CD14-positive monocyte (primary cell): ENCODE measurements at regions of chr2 and their contacts with region 1.

Region 1: DNA sequence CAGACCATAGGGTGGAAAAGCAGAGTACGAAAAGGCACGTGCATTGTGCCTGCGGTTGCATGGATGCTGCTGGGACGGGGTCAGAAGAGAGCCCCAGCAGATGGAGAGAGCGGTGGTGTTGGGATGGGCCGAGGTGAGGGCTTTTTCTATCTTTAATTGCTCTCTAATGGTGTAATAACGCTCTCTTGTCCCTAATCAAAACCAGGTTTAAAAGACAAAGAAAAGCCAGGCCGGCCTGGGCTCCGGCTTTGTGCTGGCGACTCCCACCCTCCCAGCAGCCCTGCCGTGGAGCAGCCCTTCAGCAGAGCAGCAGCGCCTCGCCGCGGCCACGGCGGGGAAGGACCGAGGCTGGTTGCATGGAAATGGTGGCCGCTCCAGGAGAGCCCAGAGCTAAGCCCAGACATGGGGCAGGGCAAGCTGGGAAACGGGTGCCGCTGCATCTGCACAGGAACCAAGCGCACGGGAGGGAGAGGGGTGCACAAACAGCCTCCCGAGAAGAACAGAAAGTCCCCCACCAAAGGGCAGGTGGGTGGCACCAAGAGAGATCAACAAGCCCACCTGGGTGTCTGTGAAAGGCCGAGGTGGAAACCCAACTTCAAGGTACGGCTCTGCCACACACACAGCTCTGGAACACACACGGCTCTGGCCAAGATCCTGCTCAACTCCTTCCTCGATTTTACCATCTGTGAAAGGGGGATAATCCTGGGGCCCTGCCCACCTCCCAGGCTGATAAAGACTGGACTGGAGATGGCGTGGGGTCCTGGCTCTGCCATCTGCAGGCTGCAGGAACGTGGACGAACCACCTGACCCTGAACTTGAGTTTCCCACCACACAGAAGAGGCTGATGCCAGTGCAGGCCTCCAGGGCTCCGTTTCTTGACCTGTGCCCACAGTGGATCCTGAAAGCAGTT is 15.0 kb downstream of the HS1BP3 start:
- DNase-seq: peak; percentile 18 to 46 (median 41)
- H3K4me3 ChIP-seq: no peak overlapping the region
- H3K4me3 Mint-ChIP-seq: no peak overlapping the region
- H3K27ac ChIP-seq: no peak overlapping the region
- H3K27ac Mint-ChIP-seq: peak overlapping the region in 1 of 7 donors; percentile 83
- H3K4me1 ChIP-seq: no peaks in the 10 kb centered on the region
- H3K4me1 Mint-ChIP-seq: no peaks in the 10 kb centered on the region
- H3K27me3 ChIP-seq: no peaks in the 10 kb centered on the region
- H3K27me3 Mint-ChIP-seq: no peaks in the 10 kb centered on the region
- CTCF ChIP-seq: peak; percentile 76

Region 2: GRCh38 chr2:20398956-20399567 is 236.9 kb before region 1 on chr2:
- intact Hi-C with region 1: loop called (anchors 5 kb)
- DNase-seq: no peak
- H3K4me3 ChIP-seq: no peak overlapping the region
- H3K4me3 Mint-ChIP-seq: no peak overlapping the region
- H3K27ac ChIP-seq: no peak overlapping the region
- H3K27ac Mint-ChIP-seq: no peak overlapping the region
- H3K4me1 ChIP-seq: no peaks in the 10 kb centered on the region
- H3K4me1 Mint-ChIP-seq: no peaks in the 10 kb centered on the region
- H3K27me3 ChIP-seq: no peaks in the 10 kb centered on the region
- H3K27me3 Mint-ChIP-seq: peaks cover 2 to 6% (median 4%) of the 10 kb centered on the region in 3 donors
- CTCF ChIP-seq: no peak